Mammary epithelial cell (primary cell): ENCODE measurements at regions of chr22 and their contacts with region 1.

Region 1: GRCh38 chr22:43399338-43399979 is 12.4 kb upstream of the MPPED1 start:
- DNase-seq: no peak
- H3K4me3 ChIP-seq: no peak overlapping the region
- H3K27ac ChIP-seq: no peak overlapping the region
- H3K4me1 ChIP-seq: peaks cover 3% of the 10 kb centered on the region
- H3K27me3 ChIP-seq: peaks cover 8% of the 10 kb centered on the region
- CTCF ChIP-seq: no peak

Region 2: DNA sequence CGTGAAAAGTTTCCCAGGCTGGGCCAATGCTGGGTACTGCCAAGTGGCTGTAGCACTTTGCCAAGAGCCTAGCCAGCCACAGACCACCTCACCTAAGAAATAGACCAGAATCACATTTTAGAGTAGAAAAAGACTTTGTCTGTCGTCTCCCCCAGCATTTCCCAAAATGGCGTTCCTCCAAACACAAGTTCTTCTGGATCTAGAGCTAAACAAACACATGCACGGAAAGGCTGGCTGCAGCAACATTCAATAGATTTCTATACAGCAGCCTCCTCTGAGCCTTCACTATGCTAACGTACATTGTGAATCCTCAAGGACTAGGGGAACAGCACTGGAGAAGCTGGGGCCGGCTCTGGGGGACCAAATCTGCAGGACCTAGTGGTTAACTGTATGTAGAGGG is 347.6 kb after region 1 on chr22:
- CTCF ChIA-PET with region 1: interaction called, 22 read pairs
- dilution Hi-C with region 1: no loop called
- in situ Hi-C with region 1: no loop called
- intact Hi-C with region 1: no loop called
- DNase-seq: no peak
- H3K4me3 ChIP-seq: no peak overlapping the region
- H3K27ac ChIP-seq: no peak overlapping the region
- H3K4me1 ChIP-seq: peaks cover 5% of the 10 kb centered on the region
- H3K27me3 ChIP-seq: no peaks in the 10 kb centered on the region
- CTCF ChIP-seq: no peak